Activated T-helper 1 cell treated with anti-CD3 and anti-CD28 coated beads, Interleukin-12 subunit alpha, Interleukin-12 subunit beta, Interleukin-2, Interleukin-4 antibody, amounts not matched to agents 30 ng/mL and 10 ng/mL and 1 ng/mL, durations not matched to agents 14 hours and 24 hours and 36 hours (primary cell): ENCODE measurements at regions of chr2 and their contacts with region 1.

Region 1: DNA sequence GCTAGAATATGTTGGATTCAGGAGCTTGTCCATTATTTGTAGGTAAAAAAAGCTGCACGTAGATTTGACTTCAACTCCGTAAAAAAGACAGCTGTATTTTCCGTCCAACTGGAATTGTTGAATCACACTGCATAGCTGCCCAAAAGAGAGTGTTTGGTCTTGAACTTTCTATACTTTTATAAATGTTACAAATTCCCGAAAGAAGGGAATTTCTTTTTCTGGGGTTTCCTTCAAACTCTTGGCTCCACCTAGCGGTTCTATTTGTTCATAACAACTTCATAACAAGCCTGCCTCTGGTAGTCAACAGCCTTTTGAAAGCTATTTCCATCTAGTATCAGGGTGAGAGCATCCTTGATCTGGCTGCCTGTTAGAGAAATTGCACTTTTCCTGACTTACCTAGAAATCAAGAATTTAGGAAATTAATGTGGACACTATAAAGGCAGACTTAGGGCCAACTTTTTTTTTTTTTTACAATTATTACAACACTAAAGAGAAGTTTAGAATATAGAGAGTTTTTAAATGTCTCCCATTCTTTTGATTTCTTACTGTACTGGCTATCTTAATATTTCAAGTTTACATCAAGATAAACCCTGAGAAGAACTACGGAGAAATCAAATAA is 48.1 kb downstream of the TMEM185B start:
- DNase-seq: peak; percentile 18
- H3K4me3 Mint-ChIP-seq: no peak overlapping the region
- H3K27ac Mint-ChIP-seq: no peak overlapping the region
- H3K4me1 Mint-ChIP-seq: peaks cover 47% of the 10 kb centered on the region
- H3K27me3 Mint-ChIP-seq: peaks cover 7% of the 10 kb centered on the region

Region 2: DNA sequence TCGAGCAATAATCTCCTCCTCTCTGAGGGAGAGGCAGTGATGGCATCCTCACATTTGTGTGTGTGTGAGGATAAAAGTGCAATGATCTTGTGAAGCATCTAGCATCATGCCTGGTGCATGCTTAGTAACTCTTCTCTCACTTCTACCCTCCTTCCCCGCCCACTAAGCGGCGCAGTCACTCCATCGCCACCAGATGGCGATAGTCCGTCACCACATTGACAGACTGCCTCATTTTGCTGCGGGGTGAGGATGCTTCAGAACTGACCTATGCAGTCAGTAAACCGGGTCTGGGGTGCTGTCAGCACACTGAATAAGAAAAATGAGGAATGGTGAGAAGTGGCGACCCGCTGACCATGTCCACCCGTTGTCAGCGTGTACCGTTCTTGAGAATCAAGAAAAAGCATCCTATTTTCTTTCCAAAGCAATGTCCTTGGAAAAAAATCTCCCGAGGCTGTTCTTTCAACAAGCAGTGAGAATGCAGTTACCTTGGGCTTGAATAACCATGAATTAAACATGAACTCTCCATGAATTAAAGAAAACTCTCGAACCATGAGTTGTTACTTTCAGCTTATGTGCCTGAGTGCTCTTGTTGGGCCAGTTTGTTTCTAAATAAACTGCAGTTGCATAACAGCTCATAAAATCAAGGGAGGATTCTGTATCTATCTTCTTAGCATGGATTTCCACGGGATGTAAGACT is 533.4 kb before region 1 on chr2:
- intact Hi-C with region 1: loop called (anchors 1 kb)
- DNase-seq: peak; percentile 60
- H3K4me3 Mint-ChIP-seq: no peak overlapping the region
- H3K27ac Mint-ChIP-seq: no peak overlapping the region
- H3K4me1 Mint-ChIP-seq: peaks cover 7% of the 10 kb centered on the region
- H3K27me3 Mint-ChIP-seq: peaks cover 6% of the 10 kb centered on the region

Region 3: GRCh38 chr2:119753041-119753929 is 421.8 kb before region 1 on chr2:
- intact Hi-C with region 1: loop called (anchors 1 kb)
- DNase-seq: peak; percentile 6
- H3K4me3 Mint-ChIP-seq: no peak overlapping the region
- H3K27ac Mint-ChIP-seq: no peak overlapping the region
- H3K4me1 Mint-ChIP-seq: peaks cover 12% of the 10 kb centered on the region
- H3K27me3 Mint-ChIP-seq: peaks cover 20% of the 10 kb centered on the region

Region 4: DNA sequence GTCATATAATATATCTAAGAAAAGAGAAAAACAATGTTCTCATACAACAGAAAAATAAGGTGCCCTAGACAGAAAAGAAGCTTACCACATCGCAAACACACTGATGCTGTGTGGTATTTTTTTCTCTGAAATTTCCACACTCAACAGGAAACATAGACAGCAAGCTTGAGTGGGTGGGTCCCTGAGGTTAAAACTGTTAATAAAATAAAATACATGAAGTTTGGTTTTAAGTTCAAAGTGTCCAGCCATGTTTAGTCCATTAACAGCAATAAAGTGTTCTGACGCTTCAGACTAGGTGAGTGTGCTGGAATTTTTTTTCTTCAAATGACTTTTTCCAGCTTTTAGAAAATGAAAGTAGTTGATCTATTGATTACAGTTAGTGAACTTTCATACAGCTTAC is 245.5 kb before region 1 on chr2:
- intact Hi-C with region 1: loop called (anchors 5 kb)
- DNase-seq: peak; percentile 34
- H3K4me3 Mint-ChIP-seq: peak overlapping the region; percentile 72
- H3K27ac Mint-ChIP-seq: peak overlapping the region; percentile 88
- H3K4me1 Mint-ChIP-seq: peaks cover 60% of the 10 kb centered on the region
- H3K27me3 Mint-ChIP-seq: no peaks in the 10 kb centered on the region

Region 5: DNA sequence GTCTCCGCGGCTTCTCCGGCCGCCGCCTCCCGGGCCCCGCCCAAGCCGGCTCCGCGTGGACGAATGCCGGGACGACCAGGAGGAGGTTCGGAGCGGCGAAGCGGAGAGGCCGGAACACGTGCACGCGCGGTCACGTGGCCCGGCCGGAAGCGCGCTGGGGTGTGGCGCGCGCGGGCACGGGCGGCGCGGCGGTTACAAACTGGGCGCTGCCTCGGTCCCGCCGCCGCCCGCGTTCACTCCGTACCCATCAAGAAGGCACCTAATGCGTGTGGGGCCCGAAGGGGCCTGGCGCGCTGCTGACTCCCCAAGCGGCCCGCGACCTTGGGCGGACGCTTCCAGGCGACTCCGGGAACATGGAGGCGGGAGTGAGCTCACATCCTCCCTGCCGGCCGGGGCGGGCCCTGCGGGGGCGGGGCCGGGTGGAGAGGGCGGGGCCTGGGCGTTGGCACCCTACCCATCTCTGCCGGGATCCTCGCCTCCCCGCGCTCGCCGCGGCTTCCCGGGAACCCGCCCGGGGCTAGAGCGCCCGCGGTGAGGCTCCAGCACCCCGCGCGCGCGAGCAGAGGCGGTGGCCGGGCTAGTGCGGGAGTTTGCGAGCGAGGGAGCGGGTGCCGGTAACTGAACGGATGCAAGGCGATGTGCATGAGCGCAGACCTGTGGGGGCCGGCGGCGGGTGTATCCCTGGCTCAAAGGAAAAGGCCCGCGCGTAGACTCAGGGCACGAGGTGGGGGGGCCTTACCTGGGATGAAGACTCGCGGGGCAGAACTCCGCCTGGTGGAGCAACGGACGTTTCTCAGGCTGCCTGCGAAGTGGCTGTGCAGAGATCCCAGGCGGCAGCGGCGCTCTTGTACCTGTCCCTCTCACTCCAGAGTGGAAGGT is 48.2 kb after region 1 on chr2 and contains the start of gene TMEM185B:
- intact Hi-C with region 1: loop called (anchors 1 kb)
- DNase-seq: peak; percentile 90
- H3K4me3 Mint-ChIP-seq: peak within 1 kb of the TSS; percentile 86
- H3K27ac Mint-ChIP-seq: peak within 1 kb of the TSS; percentile 92
- H3K4me1 Mint-ChIP-seq: peaks cover 69% of the 10 kb centered on the region
- H3K27me3 Mint-ChIP-seq: peaks cover 2% of the 10 kb centered on the region
- total RNA-seq, gene TMEM185B: 47.9 and 48.6 TPM in 2 replicates

Region 6: DNA sequence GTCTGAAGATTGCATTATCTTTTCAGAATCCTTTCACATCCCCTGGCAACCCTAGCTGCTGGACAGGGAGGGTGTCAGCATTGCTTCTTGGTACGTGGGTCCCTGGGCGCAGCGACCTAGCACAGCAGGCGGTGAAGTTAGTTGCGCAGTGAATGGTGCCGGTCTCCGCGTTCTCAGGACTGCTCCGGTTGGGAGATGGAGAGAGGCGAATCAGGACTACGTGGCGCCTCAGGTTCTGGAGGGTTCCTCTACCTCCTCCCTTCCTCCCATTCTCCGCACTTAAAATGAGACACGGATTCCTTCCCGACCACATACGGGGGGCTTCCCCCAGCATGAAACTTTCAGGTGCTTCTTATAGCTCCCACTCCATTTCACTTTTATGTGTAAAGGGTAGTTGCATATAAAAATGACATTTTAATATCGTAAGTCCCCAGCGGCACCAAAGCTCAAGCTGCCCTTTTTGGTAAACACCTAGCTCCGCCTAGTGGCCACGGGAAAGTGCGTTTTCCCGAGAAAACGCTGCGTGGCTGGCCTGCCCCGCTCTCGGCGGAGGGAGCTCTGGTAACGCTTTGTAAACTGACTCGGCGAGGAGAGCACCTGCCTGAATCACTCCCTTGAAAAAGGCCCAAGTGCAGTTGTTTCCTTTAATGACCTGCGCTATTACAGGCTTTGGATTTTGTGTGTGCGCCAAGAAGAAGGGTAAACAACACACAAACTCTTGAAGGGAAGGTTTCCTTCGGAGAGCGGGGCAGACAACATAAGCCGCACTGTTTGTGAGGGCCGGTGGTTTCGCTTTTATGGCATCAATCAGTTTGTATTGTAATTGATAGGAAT is 138.0 kb after region 1 on chr2:
- intact Hi-C with region 1: loop called (anchors 1 kb)
- DNase-seq: peak; percentile 64
- H3K4me3 Mint-ChIP-seq: peak overlapping the region; percentile 77
- H3K27ac Mint-ChIP-seq: peak overlapping the region; percentile 4
- H3K4me1 Mint-ChIP-seq: peaks cover 42% of the 10 kb centered on the region
- H3K27me3 Mint-ChIP-seq: peaks cover under 1% of the 10 kb centered on the region